ENCODE measurements at regions of chr9 and their contacts with region 1.

Region 1: GRCh38 chr9:109520478-109521132 is 22.5 kb upstream of the PTPN3 start:
- DNase-seq: peak; percentile 81
- ATAC-seq: peak; percentile 95 to 98
- H3K4me3 ChIP-seq: no peak overlapping the region
- H3K27ac ChIP-seq: no peak overlapping the region
- H3K4me1 ChIP-seq: no peaks in the 10 kb centered on the region; the same call in 2 of the 3 replicates
- CTCF ChIP-seq: peak; percentile 95
- EP300 ChIP-seq: no peak
- POLR2A ChIP-seq: no peak
- RAD21 ChIP-seq: peak; percentile 96 to 97

Region 2: GRCh38 chr9:109483744-109484429 is 36.7 kb before region 1 on chr9:
- CTCF ChIA-PET with region 1: interaction called, 10 read pairs
- POLR2A ChIA-PET with region 1: no interaction called
- DNase-seq: no peak
- ATAC-seq: no peak; a peak in 1 of 6 replicates
- H3K4me3 ChIP-seq: no peak overlapping the region
- H3K27ac ChIP-seq: no peak overlapping the region
- H3K4me1 ChIP-seq: peaks cover 24% of the 10 kb centered on the region
- CTCF ChIP-seq: no peak
- EP300 ChIP-seq: no peak
- POLR2A ChIP-seq: no peak
- RAD21 ChIP-seq: no peak

Region 3: DNA sequence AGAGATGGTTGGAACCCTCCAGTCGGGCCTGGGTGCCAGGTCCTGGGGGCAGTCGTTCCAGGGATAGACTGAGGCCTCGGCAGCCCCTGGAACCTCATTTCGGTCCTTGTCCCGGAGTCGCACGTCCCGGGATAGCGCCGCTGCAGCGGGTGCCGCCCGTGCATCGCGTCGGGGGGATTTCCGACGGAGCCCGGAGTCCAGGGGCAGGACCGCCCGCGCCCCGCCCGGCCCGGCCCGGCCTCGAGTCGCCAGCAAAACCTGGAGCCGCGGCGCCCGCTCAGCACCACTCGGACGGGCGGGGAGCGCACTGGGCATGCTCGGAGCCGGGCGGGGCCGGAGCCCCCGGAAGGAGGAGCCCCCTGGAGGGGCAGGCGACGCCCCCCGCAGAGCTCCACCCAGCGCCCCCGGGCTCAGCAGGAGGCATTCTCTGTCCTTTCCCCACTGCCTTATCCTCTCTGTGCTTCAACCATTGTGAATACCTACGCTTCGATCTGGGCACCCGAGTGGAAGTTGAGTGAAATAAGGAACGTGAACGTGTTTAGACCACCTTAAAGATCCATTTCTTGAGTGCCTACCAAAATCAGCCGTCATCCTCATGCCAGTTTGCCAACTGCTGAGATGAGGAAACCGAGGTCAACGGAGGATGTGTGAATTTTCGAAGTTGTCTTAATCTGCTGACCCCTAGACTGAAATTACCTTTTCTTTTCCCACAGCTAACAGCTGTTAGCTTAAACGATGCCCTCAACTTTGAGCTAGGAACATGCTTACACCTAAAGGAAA is 20.8 kb before region 1 on chr9:
- CTCF ChIA-PET with region 1: interaction called, 88 read pairs
- POLR2A ChIA-PET with region 1: no interaction called
- DNase-seq: peak; percentile 69 to 74
- ATAC-seq: peak; percentile 82 to 95
- H3K4me3 ChIP-seq: peak overlapping the region; percentile 50
- H3K27ac ChIP-seq: peak overlapping the region; percentile 61 to 97
- H3K4me1 ChIP-seq: peaks cover 24% of the 10 kb centered on the region
- CTCF ChIP-seq: no peak
- EP300 ChIP-seq: no peak
- POLR2A ChIP-seq: peak; percentile 41; the same call in 1 of the 2 replicates
- RAD21 ChIP-seq: no peak

Region 4: GRCh38 chr9:109509611-109510010 is 11.0 kb before region 1 on chr9:
- CTCF ChIA-PET with region 1: interaction called, 12 read pairs
- POLR2A ChIA-PET with region 1: no interaction called
- DNase-seq: no peak
- ATAC-seq: no peak
- H3K4me3 ChIP-seq: no peak overlapping the region
- H3K27ac ChIP-seq: peak overlapping the region in 1 of 2 experiments; percentile 19; a peak in 1 of 6 replicates
- H3K4me1 ChIP-seq: peaks cover 26% of the 10 kb centered on the region
- CTCF ChIP-seq: no peak
- EP300 ChIP-seq: no peak
- POLR2A ChIP-seq: no peak
- RAD21 ChIP-seq: no peak

Measured in A549 (cell line).